Mammary epithelial cell (primary cell): ENCODE measurements at regions of chr3 and their contacts with region 1.

Region 1: DNA sequence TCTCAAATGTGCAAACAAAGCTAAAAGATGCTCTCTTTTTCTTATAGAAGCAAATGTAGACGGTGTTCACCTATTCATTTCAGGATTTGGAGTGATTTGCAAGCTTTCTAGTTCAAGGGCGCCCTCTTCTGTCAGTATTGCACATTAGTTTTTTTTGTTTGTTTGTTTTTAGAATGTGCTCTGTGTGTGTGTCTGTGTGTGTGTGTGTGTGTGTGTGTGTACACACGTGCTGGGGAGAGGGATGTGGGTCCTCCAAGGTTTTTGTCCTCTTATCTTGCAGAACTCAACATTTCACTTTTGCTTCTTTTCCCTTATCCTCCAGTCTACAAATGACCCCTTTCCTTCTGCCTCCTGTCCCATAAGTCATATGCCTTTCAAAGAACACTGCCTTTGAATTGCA is 23.5 kb downstream of the DNAH1 start:
- DNase-seq: peak; percentile 60
- H3K4me3 ChIP-seq: no peak overlapping the region
- H3K27ac ChIP-seq: no peak overlapping the region
- H3K4me1 ChIP-seq: no peaks in the 10 kb centered on the region
- H3K27me3 ChIP-seq: no peaks in the 10 kb centered on the region
- CTCF ChIP-seq: peak; percentile 53 to 72

Region 2: GRCh38 chr3:52001443-52001974 is 338.1 kb before region 1 on chr3:
- CTCF ChIA-PET with region 1: no interaction called
- dilution Hi-C with region 1: no loop called
- in situ Hi-C with region 1: no loop called
- intact Hi-C with region 1: loop called (anchors 1 kb)
- DNase-seq: peak; percentile 49
- H3K4me3 ChIP-seq: no peak overlapping the region
- H3K27ac ChIP-seq: no peak overlapping the region
- H3K4me1 ChIP-seq: peaks cover 35% of the 10 kb centered on the region
- H3K27me3 ChIP-seq: no peaks in the 10 kb centered on the region
- CTCF ChIP-seq: peak; percentile 75 to 90

Region 3: DNA sequence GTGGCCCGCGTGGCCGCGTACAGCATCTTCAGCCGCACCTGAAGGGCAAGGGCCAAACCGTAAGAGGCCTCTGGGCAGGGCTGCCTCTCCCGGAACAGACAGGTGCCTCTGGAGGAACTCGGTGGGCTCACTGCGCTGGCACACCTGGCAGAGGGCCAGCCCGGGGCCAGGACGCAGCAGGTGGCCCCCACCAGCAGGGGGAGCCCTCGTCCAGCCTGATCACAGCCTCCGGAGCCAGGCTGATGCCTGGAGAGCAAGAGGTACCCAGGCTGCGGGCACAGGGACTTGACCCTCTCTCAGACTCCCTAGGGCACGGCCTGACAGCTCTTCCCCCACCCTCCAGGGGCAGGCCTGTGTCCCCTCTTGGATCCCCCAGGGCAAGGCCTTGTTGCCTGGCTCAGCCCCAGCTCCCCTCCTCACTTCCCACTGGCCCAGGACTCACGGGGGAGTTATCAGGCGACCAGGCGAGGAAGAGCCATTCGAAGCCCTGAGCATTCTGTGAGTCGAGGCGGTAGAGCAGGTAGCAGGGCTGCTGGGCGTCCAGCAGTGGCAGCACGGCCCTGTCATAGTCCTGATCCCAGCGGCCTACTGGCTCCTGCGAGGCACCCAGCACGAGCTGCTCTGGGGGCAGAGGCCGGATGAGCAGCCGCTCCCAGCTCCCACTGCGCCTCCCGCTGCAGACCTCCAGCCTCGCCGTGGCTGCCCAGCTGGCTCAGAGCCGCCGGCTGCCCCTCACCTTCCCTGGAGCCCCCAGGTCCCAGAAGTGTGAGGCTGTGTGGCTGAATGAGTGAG is 107.9 kb before region 1 on chr3:
- CTCF ChIA-PET with region 1: interaction called, 5 read pairs
- dilution Hi-C with region 1: no loop called
- in situ Hi-C with region 1: loop called (anchors 5 kb)
- intact Hi-C with region 1: loop called (anchors 1 kb)
- DNase-seq: no peak
- H3K4me3 ChIP-seq: no peak overlapping the region
- H3K27ac ChIP-seq: no peak overlapping the region
- H3K4me1 ChIP-seq: peaks cover 5% of the 10 kb centered on the region
- H3K27me3 ChIP-seq: no peaks in the 10 kb centered on the region
- CTCF ChIP-seq: peak; percentile 88 to 98

Region 4: DNA sequence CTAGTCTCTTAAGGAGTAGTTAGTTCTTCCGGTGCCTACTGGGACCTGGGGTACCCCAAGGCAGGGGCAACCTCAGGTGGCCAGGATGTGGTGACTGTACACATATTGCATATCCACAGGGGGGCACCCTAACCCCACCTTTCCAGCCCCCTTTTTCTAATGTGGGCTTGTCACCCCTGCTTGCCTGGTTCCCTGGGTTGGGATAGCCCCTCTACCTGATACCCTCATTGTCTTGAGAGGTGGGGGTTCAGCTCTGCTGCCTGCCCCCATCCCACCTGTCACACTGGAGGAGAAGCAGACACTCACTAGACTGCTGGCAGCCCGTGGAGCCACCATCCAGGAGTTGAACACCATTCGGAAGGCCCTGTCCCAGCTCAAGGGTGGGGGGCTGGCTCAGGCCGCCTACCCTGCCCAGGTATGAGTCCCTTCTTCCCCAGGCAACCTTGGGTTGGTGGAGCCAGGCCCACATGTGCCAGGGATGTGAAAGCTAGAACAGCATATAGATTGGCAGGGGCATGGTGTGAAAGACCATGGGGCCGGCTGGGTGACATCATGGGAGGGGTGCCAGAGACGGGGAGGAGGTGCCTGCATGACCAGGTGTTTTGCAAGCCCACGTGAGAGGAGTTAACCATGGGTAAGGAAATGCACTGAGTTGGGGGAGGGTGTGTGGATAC is 48.0 kb before region 1 on chr3:
- CTCF ChIA-PET with region 1: no interaction called
- dilution Hi-C with region 1: no loop called
- in situ Hi-C with region 1: no loop called
- intact Hi-C with region 1: loop called (anchors 1 kb)
- DNase-seq: no peak
- H3K4me3 ChIP-seq: no peak overlapping the region
- H3K27ac ChIP-seq: no peak overlapping the region
- H3K4me1 ChIP-seq: peaks cover 4% of the 10 kb centered on the region
- H3K27me3 ChIP-seq: no peaks in the 10 kb centered on the region
- CTCF ChIP-seq: peak in 1 of 2 donors; percentile 54

Region 5: GRCh38 chr3:52552089-52552488 is 212.5 kb after region 1 on chr3:
- CTCF ChIA-PET with region 1: interaction called, 10 read pairs
- dilution Hi-C with region 1: no loop called
- in situ Hi-C with region 1: no loop called
- intact Hi-C with region 1: no loop called
- DNase-seq: no peak
- H3K4me3 ChIP-seq: no peak overlapping the region
- H3K27ac ChIP-seq: no peak overlapping the region
- H3K4me1 ChIP-seq: no peaks in the 10 kb centered on the region
- H3K27me3 ChIP-seq: no peaks in the 10 kb centered on the region
- CTCF ChIP-seq: no peak